ENCODE measurements at regions of chr16 and their contacts with region 1.

Region 1: DNA sequence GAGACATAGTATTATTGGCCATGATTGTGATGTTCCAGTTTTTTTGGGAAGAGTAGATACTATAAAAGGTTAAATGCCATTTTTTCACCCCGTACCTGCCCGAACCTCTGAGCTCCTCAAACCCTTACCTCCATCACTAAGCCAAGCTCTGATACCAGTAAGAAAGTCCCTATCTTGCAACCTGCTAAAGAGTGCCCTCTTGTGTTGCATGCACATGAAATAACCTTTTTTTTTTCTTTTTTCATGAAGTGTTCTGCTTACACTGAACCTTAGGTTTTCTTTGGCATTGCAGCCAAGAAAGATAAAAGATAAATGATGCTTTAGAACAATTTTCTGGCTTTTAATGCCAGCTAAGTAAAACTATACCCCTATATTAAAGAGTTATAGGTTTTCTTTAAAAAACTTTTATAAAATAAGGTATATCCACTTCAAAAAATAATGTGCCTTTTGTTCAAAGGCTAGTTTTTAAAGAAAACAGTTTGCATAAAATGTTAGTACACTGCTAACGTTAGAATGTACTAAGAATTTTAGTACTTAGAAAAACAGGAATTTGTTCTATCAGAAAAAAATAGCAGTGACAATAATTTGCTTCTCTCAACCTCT is 295.3 kb upstream of the PMFBP1 start:
- DNase-seq: peak; percentile 74

Region 2: GRCh38 chr16:72124761-72125634 is 342.3 kb before region 1 on chr16:
- in situ Hi-C with region 1: loop called (anchors 25 kb)
- DNase-seq: peak; percentile 67

Region 3: DNA sequence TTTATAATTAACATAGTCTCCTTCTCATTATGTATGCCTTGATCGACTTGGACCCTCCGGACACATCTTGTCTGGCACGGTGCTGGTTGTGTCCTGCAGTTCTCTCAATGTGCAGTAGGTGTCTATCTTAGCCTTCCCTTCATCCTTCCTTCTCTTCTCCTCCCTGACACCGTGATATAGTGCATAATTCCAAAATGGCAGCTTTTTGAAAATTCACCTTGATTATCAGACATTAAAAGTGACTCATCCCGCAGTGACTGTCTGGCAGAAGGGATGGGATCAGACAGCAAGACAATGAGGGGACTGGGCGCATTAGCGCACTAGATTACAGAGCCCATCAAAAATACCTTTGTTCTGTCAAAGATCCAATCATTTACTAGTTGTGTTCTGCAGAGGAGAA is 225.3 kb before region 1 on chr16:
- in situ Hi-C with region 1: loop called (anchors 25 kb)
- DNase-seq: peak; percentile 65

Region 4: GRCh38 chr16:72590151-72590937 is 123.1 kb after region 1 on chr16:
- in situ Hi-C with region 1: no loop called
- DNase-seq: no peak

Measured in ACHN (cell line).